ENCODE measurements at regions of chr9 and their contacts with region 1.

Region 1: GRCh38 chr9:77751341-77752091 is 103.4 kb upstream of the GNA14 start:
- DNase-seq: peak; percentile 75
- H3K4me3 Mint-ChIP-seq: no peak overlapping the region
- H3K27ac Mint-ChIP-seq: peak overlapping the region; percentile 59
- H3K4me1 Mint-ChIP-seq: peaks cover 24% of the 10 kb centered on the region
- H3K27me3 Mint-ChIP-seq: no peaks in the 10 kb centered on the region

Region 2: DNA sequence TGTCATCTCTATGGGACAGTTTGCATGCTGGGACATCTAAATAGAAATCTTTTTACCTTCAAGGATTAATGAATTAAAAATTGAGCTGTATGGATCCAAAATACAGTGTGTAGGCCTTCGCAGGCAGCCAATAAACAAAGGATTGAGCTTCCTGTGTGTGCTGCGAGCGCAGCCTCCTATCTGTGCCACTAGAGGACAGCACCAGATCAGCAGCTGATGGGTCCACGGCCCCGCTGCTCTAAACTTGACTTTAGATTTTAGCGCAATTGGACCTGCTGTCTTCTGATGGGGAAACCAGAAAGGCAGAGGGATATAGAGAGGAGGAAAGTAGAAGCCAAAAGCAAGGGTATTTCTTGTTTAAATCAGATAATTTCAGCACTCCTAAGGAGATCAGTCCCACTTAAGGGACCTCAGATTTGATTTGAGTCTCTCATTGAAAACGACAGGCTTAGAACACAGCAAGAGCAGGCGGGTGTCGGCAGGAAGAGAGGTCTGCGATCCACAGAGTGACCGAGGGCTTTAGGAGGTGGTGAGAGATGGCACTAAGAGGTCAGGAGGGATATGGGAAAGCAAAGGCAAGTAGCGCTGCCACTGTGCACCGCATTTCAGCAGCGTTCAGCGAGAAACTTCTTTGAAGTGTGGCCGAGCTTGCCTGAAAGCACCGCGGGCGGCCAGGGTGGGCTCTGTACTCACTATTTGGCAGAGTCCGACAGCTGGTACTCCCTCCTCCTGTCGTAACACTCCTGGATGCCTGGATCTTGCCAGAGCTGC is 317.7 kb before region 1 on chr9:
- intact Hi-C with region 1: loop called (anchors 1 kb)
- DNase-seq: peak; percentile 82
- H3K4me3 Mint-ChIP-seq: no peak overlapping the region
- H3K27ac Mint-ChIP-seq: no peak overlapping the region
- H3K4me1 Mint-ChIP-seq: no peaks in the 10 kb centered on the region
- H3K27me3 Mint-ChIP-seq: peaks cover 2% of the 10 kb centered on the region

Region 3: DNA sequence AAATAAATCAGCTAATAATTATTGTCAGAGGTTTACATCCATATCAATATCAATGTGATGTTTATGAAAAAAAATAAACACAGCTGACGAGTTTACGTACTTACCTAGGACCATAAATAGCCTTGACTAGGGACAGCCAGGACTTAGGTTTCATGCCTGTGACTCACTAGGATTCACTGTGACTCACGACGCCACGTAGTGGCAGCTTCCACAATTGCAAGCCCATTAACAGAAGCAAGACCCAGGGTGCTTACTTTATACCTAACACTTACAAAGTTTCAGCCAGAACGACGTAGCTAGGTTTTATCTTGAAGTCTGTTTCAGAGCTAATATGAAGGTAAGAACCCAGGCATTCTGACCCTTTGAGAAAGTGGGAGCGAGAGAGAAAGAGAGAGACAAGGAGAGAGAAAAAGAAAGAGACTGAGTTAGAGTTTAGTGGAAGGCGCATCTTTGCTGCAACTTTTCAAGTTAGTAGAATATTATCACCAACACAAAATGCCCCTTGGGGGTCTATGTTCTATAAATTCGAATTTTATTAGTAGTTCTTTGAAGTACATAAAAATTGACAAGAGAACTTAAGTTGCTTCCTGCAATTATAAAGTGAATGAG is 294.6 kb before region 1 on chr9:
- intact Hi-C with region 1: loop called (anchors 1 kb)
- DNase-seq: peak; percentile 95
- H3K4me3 Mint-ChIP-seq: no peak overlapping the region
- H3K27ac Mint-ChIP-seq: no peak overlapping the region
- H3K4me1 Mint-ChIP-seq: peaks cover 25% of the 10 kb centered on the region
- H3K27me3 Mint-ChIP-seq: no peaks in the 10 kb centered on the region

Region 4: GRCh38 chr9:77663754-77664153 is 87.8 kb before region 1 on chr9:
- intact Hi-C with region 1: loop called (anchors 5 kb)
- DNase-seq: no peak
- H3K4me3 Mint-ChIP-seq: no peak overlapping the region
- H3K27ac Mint-ChIP-seq: no peak overlapping the region
- H3K4me1 Mint-ChIP-seq: no peaks in the 10 kb centered on the region
- H3K27me3 Mint-ChIP-seq: peaks cover 2% of the 10 kb centered on the region

Region 5: GRCh38 chr9:77712533-77713130 is 38.9 kb before region 1 on chr9:
- intact Hi-C with region 1: loop called (anchors 5 kb)
- DNase-seq: no peak
- H3K4me3 Mint-ChIP-seq: no peak overlapping the region
- H3K27ac Mint-ChIP-seq: no peak overlapping the region
- H3K4me1 Mint-ChIP-seq: peaks cover 12% of the 10 kb centered on the region
- H3K27me3 Mint-ChIP-seq: no peaks in the 10 kb centered on the region

Region 6: GRCh38 chr9:77764894-77765780 is 13.6 kb after region 1 on chr9:
- intact Hi-C with region 1: loop called (anchors 2 kb)
- DNase-seq: no peak
- H3K4me3 Mint-ChIP-seq: no peak overlapping the region
- H3K27ac Mint-ChIP-seq: no peak overlapping the region
- H3K4me1 Mint-ChIP-seq: no peaks in the 10 kb centered on the region
- H3K27me3 Mint-ChIP-seq: no peaks in the 10 kb centered on the region

Measured in activated CD4-positive, alpha-beta T cell treated with anti-CD3 and anti-CD28 coated beads, Interleukin-2, amount 10 ng/mL, durations not matched to agents 24 days and 14 days (primary cell).